ENCODE measurements at regions of chr7 and their contacts with region 1.

Region 1: DNA sequence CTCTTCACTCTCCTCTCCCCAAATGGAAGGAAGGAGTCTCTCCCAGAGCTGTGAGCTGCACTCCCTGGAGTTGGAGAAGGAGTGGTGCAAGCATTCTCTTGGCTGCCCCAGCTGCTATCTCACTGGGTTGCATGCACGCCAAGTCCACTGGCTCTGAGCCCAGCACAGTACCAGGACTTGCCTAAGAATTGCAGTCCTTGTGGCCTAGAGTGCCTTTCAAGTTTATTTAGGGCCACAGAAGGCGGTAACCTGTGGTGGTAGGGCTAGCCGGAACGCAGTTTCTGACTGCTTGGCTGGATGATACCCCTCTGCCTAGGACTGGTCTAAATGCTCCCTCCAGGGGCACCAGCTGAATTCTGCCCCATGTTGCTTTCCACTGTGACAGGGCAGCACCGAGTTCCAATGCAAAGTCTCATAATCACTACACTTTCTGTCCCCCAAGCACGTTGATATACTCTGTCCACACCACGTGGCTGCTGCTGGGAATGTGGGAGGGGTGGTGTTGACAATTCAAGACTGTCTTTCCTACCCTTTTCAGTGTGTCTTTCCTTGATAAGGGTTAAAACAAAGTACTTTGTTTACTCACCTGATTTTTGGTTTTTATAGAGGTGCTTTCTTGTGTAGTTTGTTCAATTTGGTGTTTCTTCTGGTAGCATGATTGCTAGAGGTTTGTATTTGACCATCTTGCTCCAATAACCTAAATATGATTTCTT is 57.0 kb downstream of the PHTF2 start:
- DNase-seq: no peak
- ATAC-seq: no peak
- H3K4me3 Mint-ChIP-seq: no peak overlapping the region
- H3K27ac Mint-ChIP-seq: no peak overlapping the region
- H3K4me1 Mint-ChIP-seq: peaks cover 72% of the 10 kb centered on the region
- H3K27me3 Mint-ChIP-seq: no peaks in the 10 kb centered on the region
- CTCF ChIP-seq: no peak

Region 2: DNA sequence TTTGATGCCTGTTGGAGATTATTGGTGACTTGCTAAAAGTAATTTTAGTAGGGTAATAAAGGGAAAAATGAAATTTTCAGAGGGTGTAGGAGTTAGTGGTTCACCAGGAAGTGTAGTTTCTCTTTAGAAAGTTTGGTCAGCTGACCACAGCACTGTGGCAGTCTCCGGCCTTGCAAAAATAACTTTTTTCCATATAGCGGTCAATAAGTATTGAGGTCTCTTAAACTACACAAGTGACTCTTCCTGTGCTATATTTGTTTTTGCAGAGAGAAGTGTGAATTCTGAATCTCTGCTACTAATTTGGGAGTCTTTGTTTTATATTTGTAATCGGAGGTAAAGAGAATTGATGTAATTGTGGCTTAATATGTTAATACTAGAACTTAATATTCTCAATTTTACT is 294.2 kb before region 1 on chr7:
- CTCF ChIA-PET with region 1: no interaction called
- POLR2A ChIA-PET with region 1: no interaction called
- intact Hi-C with region 1: no loop called
- DNase-seq: no peak
- ATAC-seq: peak; percentile 45
- H3K4me3 Mint-ChIP-seq: peak overlapping the region; percentile 67
- H3K27ac Mint-ChIP-seq: peak overlapping the region; percentile 71
- H3K4me1 Mint-ChIP-seq: peaks cover 47% of the 10 kb centered on the region
- H3K27me3 Mint-ChIP-seq: no peaks in the 10 kb centered on the region
- CTCF ChIP-seq: no peak

Region 3: DNA sequence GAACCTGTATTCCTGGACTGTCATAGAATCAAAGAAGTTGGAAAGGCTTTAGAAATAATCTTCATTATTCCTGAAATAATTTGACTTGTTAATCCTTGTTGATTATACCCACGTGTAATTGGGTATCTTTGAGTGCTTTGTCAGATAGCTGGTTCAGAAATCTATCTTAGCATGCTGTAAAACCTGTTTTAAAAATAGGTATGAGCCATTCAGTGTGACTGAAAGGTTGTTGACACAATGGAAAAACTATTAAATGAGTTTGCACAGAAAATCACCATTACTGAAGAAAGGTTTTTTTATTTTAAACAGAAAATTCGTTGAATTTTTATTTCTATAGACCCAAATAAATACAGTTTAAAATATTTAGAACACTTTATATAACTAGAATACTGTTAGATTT is 18.2 kb before region 1 on chr7:
- CTCF ChIA-PET with region 1: interaction called, 3 read pairs
- POLR2A ChIA-PET with region 1: no interaction called
- intact Hi-C with region 1: loop called (anchors 1 kb)
- DNase-seq: no peak
- ATAC-seq: no peak
- H3K4me3 Mint-ChIP-seq: no peak overlapping the region
- H3K27ac Mint-ChIP-seq: no peak overlapping the region
- H3K4me1 Mint-ChIP-seq: peaks cover 67% of the 10 kb centered on the region
- H3K27me3 Mint-ChIP-seq: no peaks in the 10 kb centered on the region
- CTCF ChIP-seq: no peak